PC-3 (cell line): ENCODE measurements at regions of chr5 and their contacts with region 1.

Region 1: DNA sequence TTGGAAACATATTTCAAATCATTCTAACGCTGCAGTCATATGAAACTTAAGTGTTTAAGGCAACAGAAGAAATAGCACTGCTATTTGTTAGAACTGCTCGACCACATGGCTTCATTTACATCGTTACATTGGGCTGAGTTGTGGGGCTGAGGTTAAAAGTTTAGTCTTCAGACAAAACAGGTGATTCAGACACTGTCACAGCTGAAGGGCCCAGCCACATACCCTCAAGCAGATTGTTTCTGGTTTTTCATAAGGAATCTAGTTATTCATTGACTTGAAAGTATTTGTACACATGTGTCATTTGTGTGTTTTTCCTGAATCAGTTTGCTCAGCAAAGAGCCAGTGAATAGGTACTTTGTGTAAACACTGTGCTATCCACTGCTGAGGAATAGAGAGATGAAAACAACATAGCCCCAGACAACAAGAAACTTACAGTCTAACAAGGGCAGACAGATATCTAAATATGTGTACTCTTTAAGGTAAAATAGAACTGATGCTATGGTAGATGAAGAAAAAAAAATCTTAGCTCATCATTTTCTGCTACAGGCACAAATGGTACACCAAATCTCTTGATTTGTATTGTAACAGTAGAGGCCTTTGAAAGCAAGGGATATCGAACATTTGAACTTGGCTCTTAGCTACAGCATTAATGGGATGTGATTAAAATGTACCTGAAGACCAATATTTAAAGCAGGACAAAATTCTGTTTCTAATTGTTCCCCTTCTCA is 357.6 kb upstream of the RPS23 start:
- DNase-seq: peak; percentile 96
- ATAC-seq: peak; percentile 95
- H3K4me3 ChIP-seq: no peak overlapping the region
- H3K27ac ChIP-seq: peak overlapping the region; percentile 92
- H3K4me1 ChIP-seq: peaks cover 40% of the 10 kb centered on the region
- H3K27me3 ChIP-seq: no peaks in the 10 kb centered on the region
- CTCF ChIP-seq: no peak

Region 2: DNA sequence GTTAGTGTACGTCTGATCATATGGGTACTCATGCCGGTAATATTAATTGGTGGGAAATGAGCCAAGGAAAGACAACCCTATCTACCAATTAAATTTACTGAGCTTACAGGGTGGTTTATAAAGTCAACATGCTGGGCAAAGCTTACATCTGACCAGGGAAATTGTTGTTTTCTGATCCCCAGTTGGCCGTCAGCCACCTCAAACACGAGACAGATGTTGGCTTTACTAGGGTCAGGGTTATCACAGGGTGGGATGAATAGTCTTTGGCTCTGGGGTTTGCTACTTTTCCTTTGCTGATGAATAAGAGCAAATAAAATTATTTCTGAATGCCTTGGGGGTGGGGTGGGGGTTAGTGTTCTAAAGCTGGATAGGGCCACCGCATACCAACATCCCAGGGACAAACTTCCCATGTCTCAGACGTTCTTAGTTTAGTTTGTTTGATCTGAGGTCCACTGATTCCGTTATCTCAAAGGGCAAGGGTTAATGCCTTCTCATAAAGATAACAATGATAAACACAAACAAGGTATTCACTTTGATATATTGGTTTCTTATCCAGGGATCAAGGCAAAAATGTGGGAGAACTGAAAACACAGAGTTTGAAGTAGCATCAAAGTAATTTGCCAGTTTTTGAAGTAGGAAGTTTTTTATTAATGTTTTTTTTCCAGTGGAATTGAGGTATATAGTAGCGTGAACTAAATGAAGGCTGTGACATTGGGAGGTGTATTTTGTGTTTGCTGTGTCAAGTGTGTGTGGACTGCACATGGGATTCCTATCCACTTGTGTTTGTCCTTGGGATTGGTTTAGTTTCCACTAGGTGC is 248.5 kb before region 1 on chr5:
- CTCF ChIA-PET with region 1: no interaction called
- POLR2A ChIA-PET with region 1: no interaction called
- intact Hi-C with region 1: loop called (anchors 1 kb)
- DNase-seq: peak; percentile 93
- ATAC-seq: peak; percentile 74
- H3K4me3 ChIP-seq: no peak overlapping the region
- H3K27ac ChIP-seq: peak overlapping the region; percentile 99
- H3K4me1 ChIP-seq: peaks cover 38% of the 10 kb centered on the region
- H3K27me3 ChIP-seq: no peaks in the 10 kb centered on the region
- CTCF ChIP-seq: no peak

Region 3: GRCh38 chr5:82406205-82406773 is 229.4 kb before region 1 on chr5:
- CTCF ChIA-PET with region 1: no interaction called
- POLR2A ChIA-PET with region 1: no interaction called
- intact Hi-C with region 1: loop called (anchors 5 kb)
- DNase-seq: peak; percentile 93
- ATAC-seq: peak; percentile 79
- H3K4me3 ChIP-seq: peak overlapping the region; percentile 19; the same call in 1 of the 2 replicates
- H3K27ac ChIP-seq: peak overlapping the region; percentile 98
- H3K4me1 ChIP-seq: peaks cover 28% of the 10 kb centered on the region
- H3K27me3 ChIP-seq: no peaks in the 10 kb centered on the region
- CTCF ChIP-seq: no peak

Region 4: GRCh38 chr5:82676661-82677060 is 40.9 kb after region 1 on chr5:
- CTCF ChIA-PET with region 1: no interaction called
- POLR2A ChIA-PET with region 1: no interaction called
- intact Hi-C with region 1: no loop called
- DNase-seq: no peak
- ATAC-seq: no peak
- H3K4me3 ChIP-seq: no peak overlapping the region
- H3K27ac ChIP-seq: no peak overlapping the region
- H3K4me1 ChIP-seq: no peaks in the 10 kb centered on the region
- H3K27me3 ChIP-seq: no peaks in the 10 kb centered on the region
- CTCF ChIP-seq: no peak

Region 5: DNA sequence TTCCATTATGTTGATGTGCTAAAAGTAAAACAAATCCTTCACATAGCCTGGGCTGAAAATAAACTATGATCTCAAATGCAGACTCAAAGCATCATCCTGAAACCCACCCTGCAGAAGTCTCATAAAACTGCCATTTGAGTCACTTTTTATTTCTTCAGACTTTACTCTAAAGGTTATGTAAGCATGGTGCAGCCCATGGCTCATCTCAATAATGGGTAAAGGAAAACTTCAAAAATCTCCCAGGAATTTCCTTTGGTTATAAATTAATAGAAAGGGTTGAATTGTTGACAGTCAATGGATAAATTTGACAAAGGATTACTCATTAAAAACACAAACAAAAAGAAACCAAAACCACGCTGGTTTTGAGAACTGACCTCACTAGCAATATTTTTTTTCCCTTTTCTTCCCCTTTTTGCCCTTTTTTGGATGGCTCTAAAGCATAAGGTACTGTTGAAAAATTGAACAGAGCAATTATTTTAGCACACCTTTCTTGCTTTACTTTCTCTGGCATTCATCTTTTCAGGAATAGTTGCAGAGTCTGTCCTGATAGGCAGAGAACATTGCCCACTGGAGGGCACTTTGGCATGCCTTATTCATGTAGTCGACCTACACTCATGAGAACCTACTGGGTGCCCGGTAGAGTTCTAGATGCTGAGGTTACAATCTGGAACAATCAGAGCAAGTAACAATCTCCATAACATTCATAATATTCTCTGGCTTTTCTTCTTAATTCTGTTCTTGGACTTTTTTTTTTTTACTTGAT is 250.1 kb after region 1 on chr5:
- CTCF ChIA-PET with region 1: no interaction called
- POLR2A ChIA-PET with region 1: no interaction called
- intact Hi-C with region 1: loop called (anchors 1 kb)
- DNase-seq: peak; percentile 88
- ATAC-seq: peak; percentile 91
- H3K4me3 ChIP-seq: no peak overlapping the region
- H3K27ac ChIP-seq: peak overlapping the region; percentile 72
- H3K4me1 ChIP-seq: peaks cover 30% of the 10 kb centered on the region
- H3K27me3 ChIP-seq: no peaks in the 10 kb centered on the region
- CTCF ChIP-seq: peak; percentile 57

Region 6: DNA sequence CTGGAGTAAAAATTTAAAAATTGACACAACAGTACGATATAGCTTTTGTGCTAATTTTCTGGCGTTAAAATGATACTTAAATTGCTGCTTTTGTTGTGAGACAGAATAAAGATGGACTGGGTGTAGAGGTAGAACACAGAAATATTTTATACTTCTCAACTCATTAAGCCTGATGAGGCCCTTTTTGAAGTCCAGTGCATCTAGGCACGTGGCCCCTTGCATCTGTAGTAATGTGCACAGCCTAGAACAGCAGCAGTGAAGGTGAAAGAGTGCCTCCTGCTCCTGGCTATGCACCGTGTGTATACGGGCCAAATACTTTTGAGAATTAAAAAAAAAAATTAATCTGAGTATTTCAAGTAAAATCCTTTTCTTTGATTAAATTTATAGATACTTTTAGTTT is 557.2 kb after region 1 on chr5:
- CTCF ChIA-PET with region 1: no interaction called
- POLR2A ChIA-PET with region 1: no interaction called
- intact Hi-C with region 1: no loop called
- DNase-seq: no peak
- ATAC-seq: no peak
- H3K4me3 ChIP-seq: no peak overlapping the region
- H3K27ac ChIP-seq: no peak overlapping the region
- H3K4me1 ChIP-seq: no peaks in the 10 kb centered on the region
- H3K27me3 ChIP-seq: no peaks in the 10 kb centered on the region
- CTCF ChIP-seq: no peak